MCF 10A (cell line): ENCODE measurements at regions of chr17 and their contacts with region 1.

Region 1: GRCh38 chr17:82022981-82023374 is at the start of gene LRRC45:
- DNase-seq: peak; percentile 99
- H3K4me3 Mint-ChIP-seq: peak within 1 kb of the TSS; percentile 79
- H3K27ac Mint-ChIP-seq: peak within 1 kb of the TSS; percentile 61
- H3K4me1 Mint-ChIP-seq: peaks cover 16% of the 10 kb centered on the region
- H3K27me3 Mint-ChIP-seq: no peaks in the 10 kb centered on the region
- CTCF ChIP-seq: no peak
- total RNA-seq, gene LRRC45: 2.6 and 3.4 TPM in 2 replicates

Region 2: DNA sequence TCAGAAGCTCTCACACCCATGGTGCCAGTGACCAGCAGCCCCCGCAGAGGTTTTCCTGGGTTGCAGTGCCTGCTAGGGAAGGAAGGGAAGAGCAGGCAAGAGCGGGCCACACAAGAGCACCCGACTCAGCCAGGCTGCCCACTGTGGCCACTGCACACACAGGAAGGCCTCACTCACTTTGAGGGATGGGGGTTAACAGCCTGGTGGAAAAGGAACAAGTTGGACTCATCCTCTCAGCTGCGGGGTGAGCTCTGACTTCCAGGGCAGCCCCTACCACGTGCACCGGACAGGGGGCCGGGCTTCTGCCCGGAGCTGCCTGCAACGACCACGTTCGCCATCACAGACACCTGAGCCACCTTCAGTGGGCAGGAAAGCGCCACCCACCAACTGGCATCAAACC is 170.7 kb before region 1 on chr17:
- CTCF ChIA-PET with region 1: no interaction called
- POLR2A ChIA-PET with region 1: no interaction called
- intact Hi-C with region 1: no loop called
- DNase-seq: no peak
- H3K4me3 Mint-ChIP-seq: no peak overlapping the region
- H3K27ac Mint-ChIP-seq: no peak overlapping the region
- H3K4me1 Mint-ChIP-seq: peaks cover 8% of the 10 kb centered on the region
- H3K27me3 Mint-ChIP-seq: no peaks in the 10 kb centered on the region
- CTCF ChIP-seq: no peak

Region 3: GRCh38 chr17:81917565-81918332 is 105.2 kb before region 1 on chr17 and contains the start of gene SIRT7:
- CTCF ChIA-PET with region 1: interaction called, 5 read pairs
- POLR2A ChIA-PET with region 1: interaction called, 11 read pairs
- intact Hi-C with region 1: no loop called
- DNase-seq: peak; percentile 75
- H3K4me3 Mint-ChIP-seq: peak within 1 kb of the TSS; percentile 87
- H3K27ac Mint-ChIP-seq: peak within 1 kb of the TSS; percentile 87
- H3K4me1 Mint-ChIP-seq: peaks cover 27% of the 10 kb centered on the region
- H3K27me3 Mint-ChIP-seq: no peaks in the 10 kb centered on the region
- CTCF ChIP-seq: no peak
- total RNA-seq, gene SIRT7: 36.6 and 44.8 TPM in 2 replicates

Region 4: DNA sequence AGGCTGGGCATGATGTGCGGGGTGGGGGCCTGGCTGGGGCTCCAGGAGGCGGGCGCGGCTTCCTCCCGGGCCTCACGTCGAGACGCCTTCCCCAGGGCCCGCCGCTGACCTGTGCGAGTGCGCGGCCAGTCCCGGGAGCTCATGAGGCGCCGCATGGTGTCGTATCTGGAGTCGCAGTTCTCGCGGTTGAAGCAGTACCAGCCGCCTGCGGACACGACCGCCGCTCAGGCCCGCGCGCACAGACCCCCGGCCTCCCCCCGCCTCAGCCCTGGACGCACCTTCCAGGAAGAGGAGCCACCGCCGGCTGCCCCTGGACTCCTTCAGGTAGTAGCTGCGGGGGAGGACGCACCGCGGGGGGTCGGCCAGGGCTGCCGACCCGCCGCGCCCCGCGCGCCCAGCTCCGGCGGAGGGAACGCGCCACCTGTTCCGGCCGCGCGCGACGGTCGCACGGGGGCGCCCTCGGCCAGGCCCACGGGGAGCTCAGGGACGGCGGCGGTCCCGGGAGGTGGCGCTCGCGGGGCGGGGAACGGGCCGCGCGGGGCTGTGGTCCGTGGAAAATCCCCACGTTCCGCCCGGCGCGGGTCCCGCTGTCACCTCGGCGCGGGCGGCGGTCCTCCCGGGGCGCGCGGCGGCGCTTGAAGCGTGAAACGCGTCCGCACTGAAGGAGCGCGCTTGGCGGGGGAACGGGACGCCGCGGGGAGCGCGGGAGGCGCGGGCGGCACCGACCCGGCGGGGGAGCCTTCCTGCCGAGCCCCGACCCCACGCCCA is 63.4 kb before region 1 on chr17:
- CTCF ChIA-PET with region 1: interaction called, 74 read pairs
- POLR2A ChIA-PET with region 1: interaction called, 35 read pairs
- intact Hi-C with region 1: loop called (anchors 1 kb)
- DNase-seq: peak; percentile 49
- H3K4me3 Mint-ChIP-seq: no peak overlapping the region
- H3K27ac Mint-ChIP-seq: no peak overlapping the region
- H3K4me1 Mint-ChIP-seq: peaks cover 3% of the 10 kb centered on the region
- H3K27me3 Mint-ChIP-seq: peaks cover 9% of the 10 kb centered on the region
- CTCF ChIP-seq: peak; percentile 98

Region 5: GRCh38 chr17:82003411-82004381 is 19.3 kb before region 1 on chr17:
- CTCF ChIA-PET with region 1: interaction called, 6 read pairs
- POLR2A ChIA-PET with region 1: interaction called, 21 read pairs
- intact Hi-C with region 1: no loop called
- DNase-seq: peak; percentile 95
- H3K4me3 Mint-ChIP-seq: no peak overlapping the region
- H3K27ac Mint-ChIP-seq: no peak overlapping the region
- H3K4me1 Mint-ChIP-seq: peaks cover 10% of the 10 kb centered on the region
- H3K27me3 Mint-ChIP-seq: no peaks in the 10 kb centered on the region
- CTCF ChIP-seq: no peak

Region 6: DNA sequence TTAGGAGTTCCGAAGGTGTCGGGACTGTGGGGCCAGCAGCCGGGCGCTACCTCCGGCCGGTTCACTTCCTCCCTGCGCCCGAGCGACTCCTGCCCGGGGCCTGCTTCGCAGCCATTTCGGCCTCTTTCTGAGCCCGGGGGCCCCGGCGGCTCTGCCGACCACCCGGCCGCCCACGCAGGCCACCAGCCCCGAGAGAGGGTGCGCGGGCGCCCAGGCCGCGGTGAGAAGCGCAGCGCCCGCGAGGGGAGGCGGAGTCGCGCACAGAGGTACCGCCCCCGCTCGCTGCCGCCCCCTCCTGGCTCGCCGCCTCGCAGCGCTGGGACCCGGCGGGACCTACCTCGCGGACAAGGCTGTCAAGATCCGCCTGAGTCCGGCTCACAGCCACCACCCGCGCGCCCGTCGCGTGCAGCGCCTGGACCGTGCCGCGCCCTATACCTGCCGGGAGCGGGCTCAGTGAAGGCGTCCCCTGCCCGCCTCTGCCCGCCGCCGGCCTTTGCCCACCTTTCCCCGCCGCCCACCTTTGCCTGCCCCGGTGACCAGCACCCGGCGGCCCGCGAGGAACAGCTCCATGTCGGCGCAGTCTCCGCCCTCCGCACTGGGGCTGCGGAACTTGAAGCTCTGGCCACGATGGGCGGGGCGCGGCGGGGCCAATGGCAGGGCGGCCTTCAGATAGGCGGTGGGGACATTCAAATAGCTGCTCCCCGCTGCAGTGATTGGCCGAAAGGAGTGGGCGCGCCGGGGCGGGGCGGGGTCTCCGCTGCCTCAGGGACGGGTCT is 14.3 kb after region 1 on chr17 and contains the start of gene DCXR:
- CTCF ChIA-PET with region 1: interaction called, 11 read pairs
- POLR2A ChIA-PET with region 1: interaction called, 19 read pairs
- intact Hi-C with region 1: no loop called
- DNase-seq: peak; percentile 96
- H3K4me3 Mint-ChIP-seq: peak within 1 kb of the TSS; percentile 82
- H3K27ac Mint-ChIP-seq: peak within 1 kb of the TSS; percentile 88
- H3K4me1 Mint-ChIP-seq: peaks cover 8% of the 10 kb centered on the region
- H3K27me3 Mint-ChIP-seq: no peaks in the 10 kb centered on the region
- CTCF ChIP-seq: peak; percentile 71
- total RNA-seq, gene DCXR: 77.9 and 111 TPM in 2 replicates

Region 7: DNA sequence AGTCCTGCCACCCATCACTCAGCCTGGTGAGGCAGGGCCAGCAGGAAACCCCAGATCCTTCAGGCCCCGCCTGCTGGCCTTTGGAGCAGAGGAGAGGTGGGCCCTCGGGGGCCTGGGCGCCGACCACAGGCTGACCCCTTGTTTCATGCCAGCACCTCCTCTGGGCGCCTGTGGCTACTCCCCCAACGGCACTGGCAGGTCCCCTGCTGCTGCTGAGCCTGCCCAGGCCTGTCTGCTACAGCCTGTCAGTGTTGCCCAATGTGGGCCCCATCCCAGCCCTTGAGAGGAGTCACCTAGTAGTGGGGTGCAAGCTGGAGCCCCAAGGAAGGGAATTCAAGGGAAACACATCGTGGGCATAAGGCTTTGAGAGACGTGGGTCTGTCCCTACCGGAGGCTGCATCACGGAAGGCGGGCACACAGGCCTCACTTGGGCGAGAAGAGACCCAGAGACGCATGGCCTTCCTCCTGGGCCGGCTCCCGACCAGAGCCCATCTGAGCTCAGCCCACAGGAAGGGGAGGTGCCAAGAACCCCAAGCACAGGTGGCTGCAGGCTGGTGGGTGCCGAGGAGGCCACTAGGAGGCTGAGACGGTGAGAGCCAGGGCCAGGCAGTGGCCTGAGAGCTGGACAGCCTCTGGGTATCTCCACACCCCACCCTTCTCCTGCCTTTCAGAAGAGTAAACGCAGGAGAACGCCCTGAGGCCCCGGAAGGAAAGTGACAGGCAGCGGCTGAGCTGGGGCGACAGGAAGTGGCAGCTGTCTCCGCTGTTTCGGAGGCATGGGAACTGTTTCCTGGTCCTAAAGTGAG is 83.1 kb after region 1 on chr17:
- CTCF ChIA-PET with region 1: no interaction called
- POLR2A ChIA-PET with region 1: no interaction called
- intact Hi-C with region 1: no loop called
- DNase-seq: peak; percentile 91
- H3K4me3 Mint-ChIP-seq: peak overlapping the region; percentile 75
- H3K27ac Mint-ChIP-seq: peak overlapping the region; percentile 86
- H3K4me1 Mint-ChIP-seq: peaks cover 17% of the 10 kb centered on the region
- H3K27me3 Mint-ChIP-seq: no peaks in the 10 kb centered on the region
- CTCF ChIP-seq: peak; percentile 28